Endothelial cell of umbilical vein (primary cell): ENCODE measurements at regions of chr6 and their contacts with region 1.

Region 1: DNA sequence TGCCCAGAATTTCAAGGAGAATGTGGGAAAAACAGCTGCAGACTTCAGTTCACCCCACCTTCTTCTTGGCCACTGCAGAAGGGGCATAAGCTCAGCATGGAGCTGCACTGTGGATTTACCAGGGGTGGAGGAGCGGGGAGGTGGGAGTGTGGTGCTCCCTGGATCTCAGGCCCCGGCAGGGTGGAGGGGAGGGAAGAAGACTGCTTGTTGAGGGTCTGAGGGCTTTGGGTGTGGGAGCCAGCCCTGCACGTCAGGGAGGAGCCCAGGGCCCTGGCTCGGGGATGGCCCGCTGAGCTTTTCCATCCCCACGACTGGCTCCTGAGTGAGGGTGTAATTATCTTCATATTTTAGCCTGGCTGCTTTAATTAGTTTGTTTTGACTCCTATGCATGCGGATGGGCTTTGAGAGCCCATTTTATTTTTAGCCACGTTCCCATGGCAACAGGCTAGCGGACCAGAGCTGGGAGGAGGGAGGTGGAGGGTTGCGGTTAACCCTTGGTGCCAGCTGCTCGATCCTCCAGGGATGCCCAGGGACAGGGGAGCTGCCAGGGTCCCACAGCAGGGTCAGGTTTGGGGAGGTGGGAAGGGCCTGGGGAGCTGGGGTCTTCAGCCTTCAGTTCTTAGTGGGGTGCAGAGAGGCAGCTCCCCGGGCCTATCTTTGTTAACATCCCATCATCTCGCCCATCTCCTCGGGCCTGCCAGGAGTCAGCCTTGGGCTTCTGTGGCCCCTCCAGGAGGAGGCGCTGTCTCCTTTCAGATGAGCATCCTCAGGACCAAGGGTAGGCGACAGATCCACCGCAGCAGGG is 68.2 kb downstream of the RAB44 start:
- DNase-seq: peak; percentile 65
- H3K4me3 ChIP-seq: no peak overlapping the region
- H3K27ac ChIP-seq: no peak overlapping the region
- H3K4me1 ChIP-seq: peaks cover 15% of the 10 kb centered on the region
- H3K27me3 ChIP-seq: no peaks in the 10 kb centered on the region
- CTCF ChIP-seq: peak; percentile 90 to 96
- POLR2A ChIP-seq: no peak

Region 2: GRCh38 chr6:36615018-36615761 is 150.6 kb before region 1 on chr6:
- CTCF ChIA-PET with region 1: interaction called, 108 read pairs
- POLR2A ChIA-PET with region 1: no interaction called
- dilution Hi-C with region 1: no loop called
- intact Hi-C with region 1: no loop called
- DNase-seq: peak; percentile 85
- H3K4me3 ChIP-seq: no peak overlapping the region
- H3K27ac ChIP-seq: no peak overlapping the region
- H3K4me1 ChIP-seq: peaks cover 17% of the 10 kb centered on the region
- H3K27me3 ChIP-seq: no peaks in the 10 kb centered on the region
- CTCF ChIP-seq: peak; percentile 65 to 74
- POLR2A ChIP-seq: no peak

Region 3: DNA sequence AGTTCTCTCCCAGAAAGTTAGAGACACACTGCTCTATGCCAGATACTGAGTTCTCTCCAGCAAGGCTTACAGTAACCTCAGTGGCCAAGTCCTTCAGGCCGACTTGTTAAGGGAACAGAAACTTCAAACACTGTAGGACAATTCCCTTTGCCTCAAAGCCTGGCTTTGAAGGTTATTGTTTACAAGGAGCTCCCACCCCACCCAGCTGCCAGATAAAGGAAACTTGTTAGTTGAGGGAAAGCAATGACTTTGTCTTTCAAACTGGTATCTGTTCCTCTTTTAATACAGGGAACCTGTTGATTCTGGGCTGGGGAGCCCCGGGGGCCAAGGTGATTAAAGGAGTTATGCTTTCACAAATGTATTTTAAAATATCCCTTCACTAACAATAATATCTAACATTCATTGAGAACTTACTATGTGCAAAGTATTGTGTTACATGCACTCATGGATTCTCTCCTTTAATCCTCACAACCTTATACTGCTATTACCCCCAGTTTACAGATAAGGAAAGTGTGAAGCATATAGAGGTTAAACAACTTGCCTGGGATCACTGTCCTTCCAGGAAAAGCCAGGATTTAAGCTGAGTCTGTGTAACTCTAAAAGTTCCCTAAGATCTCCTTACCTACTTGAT is 114.8 kb before region 1 on chr6:
- CTCF ChIA-PET with region 1: no interaction called
- POLR2A ChIA-PET with region 1: no interaction called
- dilution Hi-C with region 1: no loop called
- intact Hi-C with region 1: no loop called
- DNase-seq: peak; percentile 22
- H3K4me3 ChIP-seq: no peak overlapping the region
- H3K27ac ChIP-seq: no peak overlapping the region
- H3K4me1 ChIP-seq: peaks cover 16% of the 10 kb centered on the region
- H3K27me3 ChIP-seq: peaks cover 0 to 7% of the 10 kb centered on the region in 2 experiments
- CTCF ChIP-seq: no peak
- POLR2A ChIP-seq: no peak

Region 4: DNA sequence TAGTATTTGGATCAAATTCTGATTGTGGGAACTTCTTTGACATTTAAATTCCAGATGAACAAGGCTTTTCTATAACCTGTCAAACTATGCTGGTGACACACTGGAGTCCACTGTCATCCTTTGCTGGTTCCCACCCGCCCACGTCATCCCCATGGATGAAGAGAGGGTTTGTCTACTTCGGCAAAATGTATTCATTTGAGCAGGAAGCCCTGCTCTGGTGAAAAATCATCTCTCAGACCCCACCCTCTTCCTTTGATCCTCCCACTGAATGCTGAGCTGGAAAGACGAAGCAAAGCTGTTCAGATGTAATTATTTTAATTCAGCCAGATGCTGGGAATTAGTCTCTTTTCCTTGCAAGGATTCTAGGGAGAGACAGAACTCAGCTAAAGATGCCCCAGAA is 23.0 kb after region 1 on chr6:
- CTCF ChIA-PET with region 1: interaction called, 193 read pairs
- POLR2A ChIA-PET with region 1: no interaction called
- dilution Hi-C with region 1: no loop called
- intact Hi-C with region 1: no loop called
- DNase-seq: no peak
- H3K4me3 ChIP-seq: no peak overlapping the region
- H3K27ac ChIP-seq: no peak overlapping the region
- H3K4me1 ChIP-seq: peaks cover 4% of the 10 kb centered on the region
- H3K27me3 ChIP-seq: no peaks in the 10 kb centered on the region
- CTCF ChIP-seq: no peak
- POLR2A ChIP-seq: no peak

Region 5: GRCh38 chr6:36874443-36875249 is 108.8 kb after region 1 on chr6 and contains the start of gene PPIL1:
- CTCF ChIA-PET with region 1: interaction called, 22 read pairs
- POLR2A ChIA-PET with region 1: no interaction called
- dilution Hi-C with region 1: no loop called
- intact Hi-C with region 1: no loop called
- DNase-seq: peak; percentile 93
- H3K4me3 ChIP-seq: peak within 1 kb of the TSS; percentile 63 to 95 (median 67)
- H3K27ac ChIP-seq: peak within 1 kb of the TSS; percentile 82
- H3K4me1 ChIP-seq: peaks cover 12% of the 10 kb centered on the region
- H3K27me3 ChIP-seq: no peaks in the 10 kb centered on the region
- CTCF ChIP-seq: peak in 1 of 2 donors; percentile 2
- POLR2A ChIP-seq: peak; percentile 59
- total RNA-seq, gene PPIL1: 33.8 and 35.6 TPM in 2 replicates

Region 6: GRCh38 chr6:36912586-36912985 is 146.8 kb after region 1 on chr6:
- CTCF ChIA-PET with region 1: interaction called, 84 read pairs
- POLR2A ChIA-PET with region 1: no interaction called
- dilution Hi-C with region 1: no loop called
- intact Hi-C with region 1: loop called (anchors 1 kb)
- DNase-seq: no peak
- H3K4me3 ChIP-seq: no peak overlapping the region
- H3K27ac ChIP-seq: no peak overlapping the region
- H3K4me1 ChIP-seq: peaks cover 8% of the 10 kb centered on the region
- H3K27me3 ChIP-seq: no peaks in the 10 kb centered on the region
- CTCF ChIP-seq: no peak
- POLR2A ChIP-seq: no peak

Region 7: GRCh38 chr6:37059344-37060206 is 293.8 kb after region 1 on chr6:
- CTCF ChIA-PET with region 1: no interaction called
- POLR2A ChIA-PET with region 1: no interaction called
- dilution Hi-C with region 1: no loop called
- intact Hi-C with region 1: no loop called
- DNase-seq: peak; percentile 77
- H3K4me3 ChIP-seq: no peak overlapping the region
- H3K27ac ChIP-seq: peak overlapping the region; percentile 69
- H3K4me1 ChIP-seq: peaks cover 9% of the 10 kb centered on the region
- H3K27me3 ChIP-seq: no peaks in the 10 kb centered on the region
- CTCF ChIP-seq: peak; percentile 53 to 60
- POLR2A ChIP-seq: no peak

Region 8: GRCh38 chr6:37207903-37208456 is 442.2 kb after region 1 on chr6:
- CTCF ChIA-PET with region 1: interaction called, 5 read pairs
- POLR2A ChIA-PET with region 1: no interaction called
- dilution Hi-C with region 1: no loop called
- intact Hi-C with region 1: loop called (anchors 2 kb)
- DNase-seq: peak; percentile 83
- H3K4me3 ChIP-seq: no peak overlapping the region
- H3K27ac ChIP-seq: no peak overlapping the region
- H3K4me1 ChIP-seq: peaks cover 3% of the 10 kb centered on the region
- H3K27me3 ChIP-seq: peaks cover 20 to 25% of the 10 kb centered on the region in 2 experiments
- CTCF ChIP-seq: peak; percentile 72 to 84
- POLR2A ChIP-seq: no peak